ENCODE measurements at regions of chrX and their contacts with region 1.

Region 1: DNA sequence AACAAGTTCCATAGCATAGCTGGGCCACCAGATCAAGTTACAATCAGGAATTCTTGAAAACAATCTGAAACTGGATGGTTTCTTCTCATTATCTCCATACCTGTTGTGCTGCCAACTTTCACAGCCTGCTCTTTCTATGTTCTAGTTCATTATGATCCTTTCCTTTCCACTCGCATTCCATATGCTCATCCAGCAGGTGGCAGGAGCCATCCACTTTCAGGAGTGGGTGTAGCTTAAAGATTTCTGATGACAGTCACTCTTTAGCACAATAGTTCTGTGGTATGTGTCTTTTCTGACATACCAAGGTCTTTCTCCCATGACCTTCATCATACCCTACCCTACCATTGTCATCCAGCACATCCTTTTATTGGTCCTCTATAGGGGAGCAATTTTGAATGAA is 46.4 kb downstream of the PAGE2 start:
- DNase-seq: peak; percentile 10
- ATAC-seq: peak; percentile 42
- H3K4me3 Mint-ChIP-seq: no peak overlapping the region
- H3K27ac Mint-ChIP-seq: no peak overlapping the region
- H3K4me1 Mint-ChIP-seq: no peaks in the 10 kb centered on the region
- H3K27me3 Mint-ChIP-seq: no peaks in the 10 kb centered on the region
- CTCF ChIP-seq: no peak

Region 2: GRCh38 chrX:54891573-54891972 is 243.6 kb before region 1 on chrX:
- CTCF ChIA-PET with region 1: no interaction called
- POLR2A ChIA-PET with region 1: no interaction called
- intact Hi-C with region 1: no loop called
- DNase-seq: no peak
- ATAC-seq: no peak
- H3K4me3 Mint-ChIP-seq: no peak overlapping the region
- H3K27ac Mint-ChIP-seq: no peak overlapping the region
- H3K4me1 Mint-ChIP-seq: no peaks in the 10 kb centered on the region
- H3K27me3 Mint-ChIP-seq: peaks cover 6% of the 10 kb centered on the region
- CTCF ChIP-seq: no peak

Region 3: DNA sequence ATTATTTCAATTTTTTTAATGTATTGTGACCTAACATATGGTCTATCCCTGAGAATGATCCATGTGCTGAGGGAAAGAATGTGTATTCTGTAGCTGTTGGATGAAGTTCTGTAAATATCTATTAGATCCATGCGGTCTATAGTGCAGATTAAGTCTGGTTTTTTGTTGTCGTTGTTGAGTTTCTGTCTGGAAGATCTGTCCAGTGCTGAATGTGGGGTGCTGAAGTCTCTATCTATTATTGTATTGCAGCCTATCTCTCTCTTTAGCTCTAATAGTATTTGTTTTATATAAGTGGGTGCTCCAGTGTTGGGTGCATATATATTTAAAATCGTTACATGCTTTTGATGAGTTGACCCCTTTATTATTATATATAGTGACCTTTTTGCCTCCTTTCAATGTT is 155.8 kb after region 1 on chrX:
- CTCF ChIA-PET with region 1: no interaction called
- POLR2A ChIA-PET with region 1: no interaction called
- intact Hi-C with region 1: no loop called
- DNase-seq: no peak
- ATAC-seq: no peak
- H3K4me3 Mint-ChIP-seq: no peak overlapping the region
- H3K27ac Mint-ChIP-seq: no peak overlapping the region
- H3K4me1 Mint-ChIP-seq: no peaks in the 10 kb centered on the region
- H3K27me3 Mint-ChIP-seq: peaks cover 2% of the 10 kb centered on the region
- CTCF ChIP-seq: no peak

Region 4: DNA sequence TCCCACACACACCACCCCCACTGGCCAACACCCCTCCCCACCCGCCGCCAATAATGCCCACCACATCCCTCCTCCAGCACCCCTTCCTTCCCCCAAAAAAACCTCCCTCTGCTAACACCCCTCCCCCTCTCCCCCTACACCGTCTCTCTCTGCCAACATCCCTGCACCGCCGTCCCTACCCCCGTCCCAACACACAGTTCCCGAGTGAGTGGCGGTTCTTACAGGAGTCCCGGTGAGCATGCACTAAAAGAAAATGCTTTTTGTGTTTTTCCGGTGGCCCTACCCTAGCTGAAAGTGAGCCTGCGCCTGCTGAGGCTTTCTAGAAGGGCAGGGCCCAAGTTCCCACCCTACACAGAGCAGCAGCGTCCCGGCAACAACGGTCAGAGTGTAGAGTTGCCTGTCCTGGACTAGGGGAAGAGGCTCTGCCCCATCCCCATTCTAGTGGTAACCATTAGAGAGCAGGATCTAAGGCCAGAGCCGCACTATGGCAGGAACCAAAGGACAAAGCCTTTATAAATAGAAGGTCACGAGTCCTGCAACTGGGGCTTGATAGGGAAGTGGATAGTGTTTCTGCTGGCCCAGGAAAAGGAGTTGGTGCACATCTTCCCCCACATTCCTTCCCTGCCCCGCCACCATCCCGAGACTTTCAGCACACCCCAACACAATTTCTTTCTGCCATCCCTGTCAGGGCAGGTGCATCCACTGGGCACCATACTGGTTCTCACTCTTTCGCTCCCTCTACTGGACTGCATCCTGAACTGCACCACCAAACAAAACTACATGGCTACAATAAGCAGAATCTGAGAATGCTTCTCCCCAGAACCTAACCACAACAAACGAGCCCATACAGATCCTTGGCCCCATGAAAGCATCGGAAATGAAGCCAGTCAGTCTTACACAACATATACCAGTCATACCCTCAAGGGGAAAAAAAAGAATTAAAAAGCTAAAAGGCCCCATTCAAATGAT is 207.6 kb after region 1 on chrX:
- CTCF ChIA-PET with region 1: interaction called, 10 read pairs
- POLR2A ChIA-PET with region 1: no interaction called
- intact Hi-C with region 1: loop called (anchors 1 kb)
- DNase-seq: no peak
- ATAC-seq: peak; percentile 68
- H3K4me3 Mint-ChIP-seq: no peak overlapping the region
- H3K27ac Mint-ChIP-seq: no peak overlapping the region
- H3K4me1 Mint-ChIP-seq: peaks cover 3% of the 10 kb centered on the region
- H3K27me3 Mint-ChIP-seq: peaks cover 4% of the 10 kb centered on the region
- CTCF ChIP-seq: no peak

Measured in activated B cell treated with CpG ODN at 0.5 μM for 24 hours (primary cell).